ENCODE measurements at regions of chr4 and their contacts with region 1.

Region 1: DNA sequence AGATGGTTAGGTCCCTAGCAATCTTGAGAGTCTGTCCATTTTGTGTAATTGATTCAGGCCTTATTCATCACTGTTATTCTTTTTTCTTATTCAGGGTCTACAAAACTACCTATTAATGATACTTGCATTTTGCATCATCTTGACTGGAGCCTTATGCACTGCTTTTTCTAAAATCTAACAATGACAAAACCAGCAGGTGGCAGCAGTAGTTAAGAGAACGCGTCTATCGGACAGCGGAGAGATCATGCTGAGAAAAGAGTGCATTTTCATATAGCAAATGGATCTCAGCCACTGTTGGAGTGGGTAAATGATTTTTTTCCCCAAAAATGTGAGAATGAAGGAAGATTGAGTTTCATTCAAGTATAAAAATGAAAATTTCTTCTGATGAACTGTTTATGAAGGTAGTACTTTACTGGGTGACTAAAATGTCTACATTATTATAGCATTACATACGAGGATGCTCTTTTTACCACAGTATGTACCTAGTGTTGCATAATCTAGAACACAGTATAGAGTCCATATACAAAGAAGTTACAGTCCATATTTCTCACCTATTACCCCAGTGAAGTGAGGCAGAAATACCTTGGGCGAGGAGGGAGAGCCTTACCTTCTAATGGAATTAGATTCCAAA is 43.2 kb downstream of the TMEM144 start:
- DNase-seq: peak in 9 of 14 experiments; percentile 5 to 61 (median 25)
- ATAC-seq: peak; percentile 55
- H3K4me3 ChIP-seq: no peak overlapping the region
- H3K4me3 Mint-ChIP-seq: no peak overlapping the region
- H3K27ac ChIP-seq: no peak overlapping the region
- H3K27ac Mint-ChIP-seq: no peak overlapping the region
- H3K4me1 ChIP-seq: no peaks in the 10 kb centered on the region
- H3K4me1 Mint-ChIP-seq: peaks cover 10% of the 10 kb centered on the region
- H3K27me3 ChIP-seq: no peaks in the 10 kb centered on the region
- H3K27me3 Mint-ChIP-seq: peaks cover 24% of the 10 kb centered on the region
- CTCF ChIP-seq: peak; percentile 62

Region 2: DNA sequence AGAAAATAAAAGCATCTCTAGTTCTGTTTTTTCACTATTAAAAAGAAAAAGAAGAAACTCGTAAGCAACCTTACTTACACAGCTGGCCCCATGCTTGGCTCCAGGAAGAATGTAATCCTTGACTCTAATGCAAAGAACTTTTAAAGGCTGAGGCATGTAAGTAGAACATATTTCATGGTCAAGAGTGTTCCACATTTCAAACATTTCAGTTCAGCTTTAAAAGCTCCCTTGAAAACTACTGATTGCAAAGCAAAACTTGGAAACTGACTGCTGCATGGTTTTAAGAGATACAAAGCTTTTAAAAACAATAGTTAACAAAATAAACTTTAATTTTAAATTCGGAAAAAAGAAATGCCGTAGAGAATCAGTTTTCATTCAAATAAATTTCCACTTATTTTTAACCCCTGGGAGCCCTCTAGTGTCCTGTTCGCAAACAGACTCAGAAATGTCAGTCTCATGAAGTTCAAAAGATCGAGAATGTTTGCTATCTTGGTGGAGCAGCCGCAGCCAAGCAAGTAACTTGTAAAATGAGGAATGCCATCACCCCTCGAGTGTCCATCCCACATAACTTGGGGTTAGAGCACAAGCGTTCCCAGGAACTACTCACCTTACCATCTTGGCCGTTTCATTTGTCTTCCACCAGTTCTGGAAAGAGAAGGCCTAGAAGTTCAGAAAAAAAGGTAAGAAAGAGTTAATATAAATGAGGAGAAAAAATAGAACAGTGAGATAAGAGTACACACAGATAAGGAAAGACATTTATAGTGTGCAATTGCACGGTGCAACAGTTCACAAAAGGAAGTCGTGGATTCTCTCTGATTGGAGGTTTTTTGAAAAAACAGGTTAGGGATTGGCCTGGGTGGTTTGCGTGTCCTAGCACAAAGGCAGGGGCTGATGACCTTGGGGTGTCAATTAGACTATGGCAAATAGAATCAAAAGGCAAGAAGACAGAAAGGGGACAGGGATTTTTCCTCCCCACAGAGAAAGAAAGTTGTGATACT is 80.9 kb before region 1 on chr4 and contains the start of gene GASK1B:
- CTCF ChIA-PET with region 1: no interaction called
- POLR2A ChIA-PET with region 1: no interaction called
- intact Hi-C with region 1: no loop called
- DNase-seq: no peak
- ATAC-seq: no peak
- H3K4me3 ChIP-seq: peak within 1 kb of the TSS; percentile 4
- H3K4me3 Mint-ChIP-seq: no peak within 1 kb of the TSS
- H3K27ac ChIP-seq: no peak within 1 kb of the TSS
- H3K27ac Mint-ChIP-seq: no peak within 1 kb of the TSS
- H3K4me1 ChIP-seq: no peaks in the 10 kb centered on the region
- H3K4me1 Mint-ChIP-seq: peaks cover 5% of the 10 kb centered on the region
- H3K27me3 ChIP-seq: peaks cover 11 to 35% of the 10 kb centered on the region in 2 experiments
- H3K27me3 Mint-ChIP-seq: peaks cover 47% of the 10 kb centered on the region
- CTCF ChIP-seq: no peak
- total RNA-seq, gene GASK1B: 0.22 to 0.28 TPM

Region 3: GRCh38 chr4:158624889-158625478 is 371.5 kb after region 1 on chr4:
- CTCF ChIA-PET with region 1: no interaction called
- POLR2A ChIA-PET with region 1: no interaction called
- intact Hi-C with region 1: loop called in 1 of 2 experiments (anchors 10 kb)
- DNase-seq: peak in 3 of 14 experiments; percentile 22 to 48 (median 47)
- ATAC-seq: no peak
- H3K4me3 ChIP-seq: no peak overlapping the region
- H3K4me3 Mint-ChIP-seq: no peak overlapping the region
- H3K27ac ChIP-seq: no peak overlapping the region
- H3K27ac Mint-ChIP-seq: no peak overlapping the region
- H3K4me1 ChIP-seq: no peaks in the 10 kb centered on the region
- H3K4me1 Mint-ChIP-seq: no peaks in the 10 kb centered on the region
- H3K27me3 ChIP-seq: peaks cover 0 to 3% of the 10 kb centered on the region in 2 experiments
- H3K27me3 Mint-ChIP-seq: peaks cover 15% of the 10 kb centered on the region
- CTCF ChIP-seq: peak; percentile 61

Region 4: DNA sequence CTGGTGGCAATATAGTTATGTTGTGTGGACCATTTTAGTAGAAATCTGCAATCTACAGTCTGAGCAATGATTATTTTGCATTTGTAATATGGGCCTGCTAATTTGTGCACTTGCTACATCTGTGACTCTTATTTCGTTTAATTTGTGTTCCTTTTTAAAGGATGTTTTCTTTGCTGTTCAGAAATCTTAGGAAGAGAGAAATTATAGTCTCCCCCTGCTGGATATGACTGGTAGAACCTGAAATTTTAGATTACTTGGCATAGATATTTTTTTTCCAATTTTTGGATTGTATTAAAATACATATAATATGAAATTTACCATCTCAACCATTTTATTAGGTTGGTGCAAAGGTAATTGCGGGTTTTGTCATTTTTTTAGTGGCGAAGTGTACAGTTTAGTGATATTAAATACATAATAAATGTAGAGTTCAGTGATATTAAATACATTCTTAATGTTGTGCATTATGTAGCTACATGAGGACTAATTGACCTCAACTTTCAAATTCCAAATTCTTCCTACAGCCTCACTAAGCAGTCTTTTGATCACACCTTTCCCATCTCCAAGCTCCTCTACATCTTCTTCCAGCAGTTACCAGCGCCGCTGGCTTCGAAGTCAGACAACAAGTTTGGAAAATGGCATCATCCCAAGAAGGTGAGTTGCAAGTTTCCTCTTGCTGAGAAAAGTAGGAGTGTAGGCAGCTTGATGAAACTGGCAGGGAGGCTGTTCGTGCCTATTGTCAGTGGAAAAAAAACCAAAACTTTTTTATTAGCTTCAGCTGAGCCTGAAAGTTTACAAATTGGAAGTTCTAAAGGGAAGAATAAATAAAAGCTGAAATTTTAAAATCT is 597.6 kb after region 1 on chr4:
- CTCF ChIA-PET with region 1: no interaction called
- POLR2A ChIA-PET with region 1: no interaction called
- intact Hi-C with region 1: loop called (anchors 5 to 10 kb)
- DNase-seq: peak in 3 of 14 experiments; percentile 42 to 56 (median 51)
- ATAC-seq: peak; percentile 37
- H3K4me3 ChIP-seq: no peak overlapping the region
- H3K4me3 Mint-ChIP-seq: no peak overlapping the region
- H3K27ac ChIP-seq: no peak overlapping the region
- H3K27ac Mint-ChIP-seq: peak overlapping the region; percentile 3
- H3K4me1 ChIP-seq: no peaks in the 10 kb centered on the region
- H3K4me1 Mint-ChIP-seq: peaks cover 12% of the 10 kb centered on the region
- H3K27me3 ChIP-seq: no peaks in the 10 kb centered on the region
- H3K27me3 Mint-ChIP-seq: no peaks in the 10 kb centered on the region
- CTCF ChIP-seq: peak; percentile 79

Region 5: DNA sequence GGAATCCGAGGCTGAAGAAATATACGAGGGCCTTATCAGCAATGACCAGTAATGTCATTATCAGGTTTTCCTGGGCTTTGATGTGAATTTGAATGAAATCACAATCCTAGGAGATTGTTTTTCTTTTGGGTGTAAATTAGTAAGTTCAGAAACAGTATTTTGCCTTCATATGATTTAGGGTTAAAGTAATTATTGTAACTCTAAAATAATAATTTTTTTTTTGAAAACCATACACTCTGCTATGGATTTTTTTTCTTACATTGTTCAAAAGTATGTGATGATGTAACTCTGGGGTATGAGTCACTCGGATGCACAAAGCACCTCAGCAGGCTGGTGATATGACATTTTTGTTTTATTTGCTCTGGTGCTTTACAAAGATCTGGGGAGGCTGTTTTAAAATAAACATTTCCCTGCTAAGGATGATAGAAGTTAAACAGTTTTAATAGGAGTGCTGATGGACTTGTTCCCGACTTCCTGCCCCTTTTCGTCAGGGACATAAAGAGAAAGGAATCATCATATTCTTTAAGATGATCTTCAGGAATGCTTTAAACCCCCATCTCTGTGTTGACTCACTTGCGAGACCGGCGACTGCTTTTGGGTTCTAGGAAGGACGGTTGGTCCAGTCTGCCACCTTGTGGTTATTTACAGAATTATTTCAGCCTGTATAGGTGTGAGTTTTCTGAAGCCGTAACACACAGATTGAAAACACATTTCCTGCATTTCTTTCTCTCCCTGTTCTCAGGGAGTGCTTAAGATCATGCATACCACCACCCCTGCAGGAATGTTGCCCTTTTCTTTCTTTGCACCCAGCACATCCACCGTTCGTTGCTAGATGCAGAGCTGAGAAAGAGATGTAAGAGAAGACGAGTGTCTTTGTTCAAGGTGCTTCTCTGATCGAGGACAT is 921.9 kb after region 1 on chr4:
- CTCF ChIA-PET with region 1: no interaction called
- POLR2A ChIA-PET with region 1: no interaction called
- intact Hi-C with region 1: loop called (anchors 2 to 10 kb)
- DNase-seq: peak; percentile 27 to 83 (median 38)
- ATAC-seq: peak; percentile 94
- H3K4me3 ChIP-seq: no peak overlapping the region
- H3K4me3 Mint-ChIP-seq: no peak overlapping the region
- H3K27ac ChIP-seq: no peak overlapping the region
- H3K27ac Mint-ChIP-seq: no peak overlapping the region
- H3K4me1 ChIP-seq: peaks cover 6% of the 10 kb centered on the region
- H3K4me1 Mint-ChIP-seq: peaks cover 49% of the 10 kb centered on the region
- H3K27me3 ChIP-seq: no peaks in the 10 kb centered on the region
- H3K27me3 Mint-ChIP-seq: no peaks in the 10 kb centered on the region
- CTCF ChIP-seq: peak; percentile 87

Region 6: DNA sequence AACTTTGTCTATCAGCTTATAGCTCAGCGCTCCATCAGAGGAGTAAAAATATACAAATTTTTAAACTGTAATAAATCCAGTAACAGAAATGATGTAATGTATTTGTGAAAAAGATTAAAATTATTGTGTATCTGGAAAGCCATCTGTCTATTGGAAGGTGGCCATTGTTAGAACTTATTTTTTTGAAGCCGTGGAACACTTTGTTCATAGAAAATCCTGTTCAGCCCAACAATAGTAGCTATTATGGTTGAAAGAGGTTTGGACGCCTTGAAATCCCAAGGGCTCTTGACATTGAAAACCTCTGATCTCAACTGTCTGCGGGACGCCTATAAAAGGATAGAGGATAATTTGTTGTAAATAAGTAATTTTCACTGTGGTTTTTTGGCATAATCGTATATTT is 947.7 kb after region 1 on chr4:
- CTCF ChIA-PET with region 1: no interaction called
- POLR2A ChIA-PET with region 1: no interaction called
- intact Hi-C with region 1: loop called in 1 of 2 experiments (anchors 5 kb)
- DNase-seq: no peak
- ATAC-seq: no peak
- H3K4me3 ChIP-seq: no peak overlapping the region
- H3K4me3 Mint-ChIP-seq: no peak overlapping the region
- H3K27ac ChIP-seq: no peak overlapping the region
- H3K27ac Mint-ChIP-seq: no peak overlapping the region
- H3K4me1 ChIP-seq: peaks cover 7% of the 10 kb centered on the region
- H3K4me1 Mint-ChIP-seq: peaks cover 12% of the 10 kb centered on the region
- H3K27me3 ChIP-seq: no peaks in the 10 kb centered on the region
- H3K27me3 Mint-ChIP-seq: no peaks in the 10 kb centered on the region
- CTCF ChIP-seq: no peak

Region 7: GRCh38 chr4:159451006-159451405 is 1197.5 kb after region 1 on chr4:
- CTCF ChIA-PET with region 1: no interaction called
- POLR2A ChIA-PET with region 1: no interaction called
- intact Hi-C with region 1: loop called in 1 of 2 experiments (anchors 5 kb)
- DNase-seq: no peak
- ATAC-seq: no peak
- H3K4me3 ChIP-seq: no peak overlapping the region
- H3K4me3 Mint-ChIP-seq: no peak overlapping the region
- H3K27ac ChIP-seq: no peak overlapping the region
- H3K27ac Mint-ChIP-seq: no peak overlapping the region
- H3K4me1 ChIP-seq: no peaks in the 10 kb centered on the region
- H3K4me1 Mint-ChIP-seq: no peaks in the 10 kb centered on the region
- H3K27me3 ChIP-seq: no peaks in the 10 kb centered on the region
- H3K27me3 Mint-ChIP-seq: peaks cover 8% of the 10 kb centered on the region
- CTCF ChIP-seq: no peak